K562 (cell line): ENCODE measurements at regions of chr4 and their contacts with region 1.

Region 1: DNA sequence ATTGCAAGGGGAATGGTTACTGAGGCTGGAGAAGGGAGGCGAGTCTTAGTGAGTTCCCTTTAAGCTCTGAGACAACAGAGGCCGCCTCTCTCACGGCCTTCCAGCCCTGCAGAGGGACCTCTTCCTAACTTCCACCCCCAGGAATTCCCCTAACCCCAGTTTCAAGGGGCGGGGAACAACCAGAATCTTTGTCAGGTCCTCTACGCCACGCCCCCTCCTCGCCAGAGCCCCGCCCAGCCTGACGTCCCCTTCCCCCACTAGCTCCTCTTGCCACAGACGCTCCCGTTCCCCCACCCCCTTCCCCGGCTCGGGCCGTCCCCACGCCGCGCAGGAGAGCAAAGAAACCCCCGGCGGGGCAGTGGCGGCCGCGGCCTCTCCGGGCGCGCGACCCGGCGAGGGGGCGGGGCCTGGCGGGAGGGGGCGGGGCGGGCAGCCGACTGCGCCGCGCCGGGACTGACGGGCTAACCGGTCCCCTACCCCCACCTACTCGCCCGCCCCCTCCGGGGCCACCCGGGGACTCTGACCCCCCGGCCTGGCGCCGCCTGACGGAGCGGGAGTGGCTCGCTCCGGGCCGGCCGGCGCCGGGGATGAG is 12.3 kb upstream of the TMEM156 start:
- DNase-seq: peak; percentile 91 to 94 (median 92)
- ATAC-seq: peak; percentile 84
- H3K4me3 ChIP-seq: peak overlapping the region; percentile 71
- H3K27ac ChIP-seq: peak overlapping the region; percentile 83
- H3K4me1 ChIP-seq: peaks cover 0 to 15% of the 10 kb centered on the region in 2 experiments; a peak in 3 of 5 replicates
- H3K27me3 ChIP-seq: no peaks in the 10 kb centered on the region
- CTCF ChIP-seq: peak in 1 of 3 experiments; percentile 38; a peak in 2 of 6 replicates
- EP300 ChIP-seq: 0 out of 2 replicates have a peak, but pooled peaks have one; percentile 24
- POLR2A ChIP-seq: peak; percentile 49; the same call in 1 of the 2 replicates
- RAD21 ChIP-seq: peak in 1 of 2 experiments; percentile 20; a peak in 1 of 4 replicates

Region 2: DNA sequence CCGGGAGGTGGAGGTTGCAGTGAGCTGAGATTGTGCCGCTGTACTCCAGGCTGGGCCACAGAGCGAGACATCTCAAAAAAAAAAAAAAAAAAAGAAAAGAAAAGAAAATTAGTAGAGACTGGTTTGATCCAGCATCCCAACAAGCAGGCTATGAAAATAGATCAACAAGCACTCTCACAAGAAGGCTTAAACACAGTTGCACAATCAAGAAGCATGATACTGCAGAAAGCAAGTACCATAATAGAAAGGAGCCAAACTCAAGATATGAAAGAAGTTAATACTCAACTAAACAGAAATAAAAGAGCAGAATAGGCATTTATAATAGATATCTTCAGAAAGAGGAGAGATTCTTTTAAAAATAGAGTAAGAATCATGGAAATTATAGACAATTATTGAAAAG is 198.4 kb before region 1 on chr4:
- CTCF ChIA-PET with region 1: no interaction called
- POLR2A ChIA-PET with region 1: no interaction called
- in situ Hi-C with region 1: no loop called
- intact Hi-C with region 1: no loop called
- DNase-seq: no peak
- ATAC-seq: no peak
- H3K4me3 ChIP-seq: no peak overlapping the region
- H3K27ac ChIP-seq: no peak overlapping the region
- H3K4me1 ChIP-seq: no peaks in the 10 kb centered on the region; a peak in 1 of 5 replicates
- H3K27me3 ChIP-seq: peaks cover 2 to 11% of the 10 kb centered on the region in 2 experiments; a peak in 4 of 5 replicates
- CTCF ChIP-seq: no peak
- EP300 ChIP-seq: no peak
- POLR2A ChIP-seq: no peak
- RAD21 ChIP-seq: no peak

Region 3: GRCh38 chr4:38902695-38903094 is 141.8 kb before region 1 on chr4:
- CTCF ChIA-PET with region 1: no interaction called
- POLR2A ChIA-PET with region 1: no interaction called
- in situ Hi-C with region 1: no loop called
- intact Hi-C with region 1: loop called (anchors 5 kb)
- DNase-seq: peak in 3 of 4 experiments; percentile 18 to 43 (median 27)
- ATAC-seq: peak; percentile 88
- H3K4me3 ChIP-seq: no peak overlapping the region
- H3K27ac ChIP-seq: no peak overlapping the region
- H3K4me1 ChIP-seq: peaks cover 0 to 2% of the 10 kb centered on the region in 2 experiments; a peak in 1 of 5 replicates
- H3K27me3 ChIP-seq: no peaks in the 10 kb centered on the region
- CTCF ChIP-seq: peak in 2 of 3 experiments; percentile 14 to 58; a peak in 2 of 6 replicates
- EP300 ChIP-seq: no peak
- POLR2A ChIP-seq: no peak
- RAD21 ChIP-seq: peak; percentile 71 to 86

Region 4: DNA sequence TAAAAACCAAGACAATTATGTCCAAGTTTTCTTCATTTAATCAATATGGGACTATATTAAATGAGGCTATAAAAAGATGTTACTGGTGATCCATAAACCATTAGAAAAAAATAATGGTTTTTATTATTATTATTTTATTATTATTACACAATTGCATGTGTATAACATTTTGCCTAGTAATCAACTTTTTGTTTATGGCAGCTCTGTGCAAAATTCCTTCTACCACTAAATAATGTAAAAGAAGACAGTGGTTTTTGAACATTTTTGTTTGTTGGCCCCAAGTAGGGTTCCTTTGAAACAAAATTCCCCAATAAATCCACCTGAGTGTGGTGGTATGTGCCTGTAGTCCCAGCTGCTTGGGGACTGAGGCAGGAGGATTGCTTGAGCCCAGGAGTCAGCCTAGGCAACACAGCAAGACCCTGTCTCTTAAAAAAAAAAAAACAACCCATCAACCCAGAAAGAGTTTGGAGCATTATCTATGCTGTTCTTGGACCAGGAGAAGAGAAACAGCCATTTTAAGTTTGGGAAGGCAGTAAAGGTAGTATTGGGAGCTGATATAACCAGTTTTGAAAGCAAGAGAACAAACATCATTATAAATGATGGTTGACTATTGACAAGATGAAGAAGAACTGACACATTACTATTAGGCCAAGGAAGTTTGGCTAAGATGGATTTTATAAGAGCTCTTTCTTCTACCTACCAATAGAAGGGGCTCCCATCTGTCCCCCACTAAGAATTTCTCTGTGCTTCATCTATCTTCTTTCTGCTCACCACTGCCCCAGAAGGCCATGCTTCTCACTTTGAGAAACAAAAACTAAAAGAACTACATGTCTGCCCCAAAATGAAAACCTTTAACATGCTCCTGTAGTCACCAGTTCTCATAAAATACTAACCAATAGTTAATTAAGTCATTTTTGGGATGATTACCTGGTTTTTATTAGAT is 14.4 kb before region 1 on chr4:
- CTCF ChIA-PET with region 1: no interaction called
- POLR2A ChIA-PET with region 1: interaction called, 11 read pairs
- in situ Hi-C with region 1: no loop called
- intact Hi-C with region 1: loop called (anchors 2 kb)
- DNase-seq: peak in 1 of 4 experiments; percentile 34
- ATAC-seq: peak; percentile 46
- H3K4me3 ChIP-seq: peak overlapping the region; percentile 17
- H3K27ac ChIP-seq: peak overlapping the region; percentile 62; the same call in 2 of the 3 replicates
- H3K4me1 ChIP-seq: peaks cover 14 to 15% of the 10 kb centered on the region in 2 experiments; a peak in 4 of 5 replicates
- H3K27me3 ChIP-seq: no peaks in the 10 kb centered on the region
- CTCF ChIP-seq: 0 out of 6 replicates have a peak, but pooled peaks of 1 of the 3 experiments have one; percentile 6
- EP300 ChIP-seq: no peak
- POLR2A ChIP-seq: no peak
- RAD21 ChIP-seq: no peak

Region 5: DNA sequence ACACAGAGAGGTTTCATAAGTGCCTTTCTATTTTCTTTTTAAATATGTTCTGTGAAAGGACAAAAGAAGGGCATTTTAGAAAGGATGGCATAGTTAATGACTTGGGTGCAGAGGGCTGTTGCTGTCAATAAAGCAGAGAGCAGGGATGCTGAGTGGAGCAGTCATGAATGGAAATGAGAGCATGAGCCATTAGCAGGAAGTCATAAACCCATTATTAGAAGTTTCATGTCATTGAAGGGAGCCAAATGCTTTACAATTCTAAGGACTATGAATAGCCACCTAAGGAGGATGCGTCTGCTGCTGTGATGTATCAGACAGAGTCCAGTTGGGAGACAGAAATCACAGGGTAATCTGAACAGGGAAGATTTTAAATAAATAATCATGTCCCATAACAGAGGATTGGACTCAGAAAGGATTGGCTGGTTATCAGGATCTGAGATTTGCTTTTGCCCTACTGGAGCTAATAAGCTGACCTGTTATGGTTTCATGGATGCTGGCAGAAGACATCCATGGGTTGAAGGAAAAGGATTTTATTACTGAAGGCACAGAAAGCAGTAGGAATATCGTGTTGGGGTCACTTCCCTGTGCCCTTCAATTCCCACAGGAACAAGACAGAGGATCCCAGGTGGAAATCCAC is 90.3 kb after region 1 on chr4:
- CTCF ChIA-PET with region 1: no interaction called
- POLR2A ChIA-PET with region 1: no interaction called
- in situ Hi-C with region 1: no loop called
- intact Hi-C with region 1: loop called (anchors 2 kb)
- DNase-seq: no peak
- ATAC-seq: no peak
- H3K4me3 ChIP-seq: no peak overlapping the region
- H3K27ac ChIP-seq: no peak overlapping the region
- H3K4me1 ChIP-seq: peaks cover 0 to 2% of the 10 kb centered on the region in 2 experiments; a peak in 1 of 5 replicates
- H3K27me3 ChIP-seq: no peaks in the 10 kb centered on the region
- CTCF ChIP-seq: no peak
- EP300 ChIP-seq: no peak
- POLR2A ChIP-seq: no peak
- RAD21 ChIP-seq: no peak